MCF 10A (cell line): ENCODE measurements at regions of chr15 and their contacts with region 1.

Region 1: GRCh38 chr15:82999905-83000671 is 11.4 kb downstream of the C15orf40 start:
- DNase-seq: peak; percentile 59
- H3K4me3 Mint-ChIP-seq: peak overlapping the region; percentile 67
- H3K27ac Mint-ChIP-seq: peak overlapping the region; percentile 69
- H3K4me1 Mint-ChIP-seq: no peaks in the 10 kb centered on the region
- H3K27me3 Mint-ChIP-seq: no peaks in the 10 kb centered on the region
- CTCF ChIP-seq: peak; percentile 57

Region 2: GRCh38 chr15:82530606-82531379 is 469.3 kb before region 1 on chr15:
- CTCF ChIA-PET with region 1: interaction called, 18 read pairs
- POLR2A ChIA-PET with region 1: no interaction called
- intact Hi-C with region 1: no loop called
- DNase-seq: peak; percentile 76
- H3K4me3 Mint-ChIP-seq: peak overlapping the region; percentile 32
- H3K27ac Mint-ChIP-seq: no peak overlapping the region
- H3K4me1 Mint-ChIP-seq: peaks cover 22% of the 10 kb centered on the region
- H3K27me3 Mint-ChIP-seq: no peaks in the 10 kb centered on the region
- CTCF ChIP-seq: peak; percentile 86

Region 3: GRCh38 chr15:82849556-82850512 is 150.3 kb before region 1 on chr15:
- CTCF ChIA-PET with region 1: interaction called, 47 read pairs
- POLR2A ChIA-PET with region 1: interaction called, 4 read pairs
- intact Hi-C with region 1: loop called (anchors 1 kb)
- DNase-seq: peak; percentile 85
- H3K4me3 Mint-ChIP-seq: no peak overlapping the region
- H3K27ac Mint-ChIP-seq: peak overlapping the region; percentile 16
- H3K4me1 Mint-ChIP-seq: no peaks in the 10 kb centered on the region
- H3K27me3 Mint-ChIP-seq: no peaks in the 10 kb centered on the region
- CTCF ChIP-seq: peak; percentile 53